Pancreas (tissue), 10 donors: ENCODE measurements at regions of chr11 and their contacts with region 1.

Region 1: DNA sequence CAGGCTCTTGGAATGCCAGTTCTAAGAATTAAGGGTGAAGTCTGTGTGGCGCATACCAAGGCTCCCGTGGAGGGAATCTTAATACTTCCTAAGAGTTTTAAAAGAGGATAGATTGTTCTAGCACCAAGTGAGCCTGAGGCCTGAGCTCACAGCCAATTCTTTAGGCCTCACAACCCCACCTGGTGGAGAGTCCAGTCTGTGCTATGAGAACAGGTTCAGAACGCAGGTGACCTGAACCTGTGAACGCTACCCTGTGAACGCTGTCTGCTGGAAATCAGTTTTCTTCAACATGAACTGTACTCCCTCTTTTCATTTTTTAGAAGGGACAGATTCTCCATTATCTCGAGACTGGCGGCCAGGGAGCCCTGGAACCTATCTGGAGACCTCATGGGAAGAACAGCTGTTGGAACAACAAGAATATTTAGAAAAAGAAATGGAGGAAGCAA is 43.2 kb upstream of the DLAT start:
- DNase-seq: peak; percentile 65 to 89 (median 82)
- ATAC-seq: peak; percentile 84 to 93 (median 89)
- H3K4me3 ChIP-seq: peak overlapping the region; percentile 31 to 53 (median 38)
- H3K27ac ChIP-seq: peak overlapping the region; percentile 63 to 95 (median 88)
- H3K4me1 ChIP-seq: peaks cover 13 to 22% (median 14%) of the 10 kb centered on the region in 3 donors
- H3K27me3 ChIP-seq: no peaks in the 10 kb centered on the region
- CTCF ChIP-seq: peak; percentile 55 to 74 (median 66)

Region 2: DNA sequence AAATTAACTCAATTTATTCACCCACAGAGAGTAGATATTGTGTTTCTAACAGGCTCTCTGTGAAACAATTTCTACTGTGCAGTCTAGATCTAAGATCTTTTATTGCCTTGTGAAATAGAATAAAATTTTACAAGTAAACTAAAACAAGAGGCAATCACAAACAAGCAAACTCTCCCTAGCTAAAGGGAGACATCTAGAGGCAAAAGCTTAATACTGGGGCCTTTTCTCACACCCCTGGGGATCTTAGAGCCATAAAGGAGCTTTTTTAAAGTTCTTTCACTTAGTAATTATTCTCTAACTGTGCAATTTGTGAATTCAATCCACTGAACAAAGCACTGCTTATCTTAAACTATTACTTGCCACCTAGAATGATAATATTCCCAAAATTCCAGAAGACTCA is 130.4 kb before region 1 on chr11:
- intact Hi-C with region 1: no loop called
- DNase-seq: no peak
- ATAC-seq: peak in 1 of 4 donors; percentile 29
- H3K4me3 ChIP-seq: no peak overlapping the region
- H3K27ac ChIP-seq: no peak overlapping the region
- H3K4me1 ChIP-seq: no peaks in the 10 kb centered on the region
- H3K27me3 ChIP-seq: no peaks in the 10 kb centered on the region
- CTCF ChIP-seq: peak in 1 of 4 donors; percentile 6

Region 3: DNA sequence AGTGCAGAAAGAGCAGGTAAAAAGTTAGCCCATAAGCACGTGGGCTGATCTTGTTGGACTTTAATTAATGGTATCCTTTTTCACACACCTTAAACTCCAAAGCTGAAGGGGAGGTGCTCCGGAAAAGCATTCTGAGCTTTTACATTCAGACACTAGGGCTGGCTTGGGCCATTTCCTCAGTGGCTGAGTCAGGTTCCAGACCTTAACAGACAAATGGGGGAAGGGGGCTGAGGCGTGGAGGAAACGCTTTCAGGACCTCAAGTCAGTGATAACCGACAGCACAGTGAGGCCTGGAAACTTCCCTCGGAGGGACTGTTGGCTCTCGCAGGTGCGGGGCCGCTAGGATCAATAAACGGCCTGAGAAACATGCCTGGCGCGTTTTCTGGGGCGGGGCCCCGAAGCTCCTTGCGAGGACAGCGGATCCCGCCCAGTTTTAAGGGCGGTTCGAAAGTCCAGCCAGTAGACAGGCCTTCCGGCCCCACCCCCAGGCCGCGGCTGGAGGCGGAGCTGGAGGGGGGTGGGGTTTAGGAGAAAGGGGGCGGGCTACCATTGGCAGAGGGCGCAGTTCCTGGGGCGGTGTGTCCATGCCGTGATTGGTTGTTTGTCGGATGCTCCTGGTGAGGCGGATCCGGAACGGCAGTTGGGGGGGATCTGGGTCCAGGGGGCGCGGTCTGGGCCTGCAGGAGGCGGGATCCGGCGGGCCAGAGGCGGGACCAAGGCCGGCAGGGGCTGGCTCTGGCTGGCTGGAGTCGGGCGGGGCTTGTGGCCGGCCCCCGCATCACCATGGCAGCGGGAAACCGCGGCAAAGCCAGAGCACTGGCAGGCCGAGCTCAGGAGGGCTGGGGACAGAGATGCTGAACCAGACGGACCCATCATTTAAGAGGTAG is 55.3 kb before region 1 on chr11:
- intact Hi-C with region 1: loop called in 2 of 3 experiments (anchors 5 to 10 kb)
- DNase-seq: peak; percentile 97 to 98 (median 98)
- ATAC-seq: peak; percentile 91 to 95 (median 92)
- H3K4me3 ChIP-seq: peak overlapping the region in 2 of 4 donors; percentile 15 to 32
- H3K27ac ChIP-seq: peak overlapping the region; percentile 61 to 91 (median 82)
- H3K4me1 ChIP-seq: peaks cover 24 to 39% (median 37%) of the 10 kb centered on the region in 3 donors
- H3K27me3 ChIP-seq: no peaks in the 10 kb centered on the region
- CTCF ChIP-seq: no peak

Region 4: GRCh38 chr11:111938687-111939160 is 43.3 kb before region 1 on chr11:
- intact Hi-C with region 1: loop called in 1 of 3 experiments (anchors 10 kb)
- DNase-seq: no peak
- ATAC-seq: peak in 1 of 4 donors; percentile 21
- H3K4me3 ChIP-seq: no peak overlapping the region
- H3K27ac ChIP-seq: no peak overlapping the region
- H3K4me1 ChIP-seq: peaks cover 0 to 7% (median 5%) of the 10 kb centered on the region in 3 donors
- H3K27me3 ChIP-seq: no peaks in the 10 kb centered on the region
- CTCF ChIP-seq: no peak